ENCODE measurements at regions of chr5 and their contacts with region 1.

Region 1: GRCh38 chr5:113384782-113385285 is 50.0 kb downstream of the TSSK1B start:
- DNase-seq: no peak
- ATAC-seq: no peak
- H3K4me3 ChIP-seq: no peak overlapping the region
- H3K27ac ChIP-seq: no peak overlapping the region
- H3K4me1 ChIP-seq: no peaks in the 10 kb centered on the region
- H3K27me3 ChIP-seq: no peaks in the 10 kb centered on the region

Region 2: DNA sequence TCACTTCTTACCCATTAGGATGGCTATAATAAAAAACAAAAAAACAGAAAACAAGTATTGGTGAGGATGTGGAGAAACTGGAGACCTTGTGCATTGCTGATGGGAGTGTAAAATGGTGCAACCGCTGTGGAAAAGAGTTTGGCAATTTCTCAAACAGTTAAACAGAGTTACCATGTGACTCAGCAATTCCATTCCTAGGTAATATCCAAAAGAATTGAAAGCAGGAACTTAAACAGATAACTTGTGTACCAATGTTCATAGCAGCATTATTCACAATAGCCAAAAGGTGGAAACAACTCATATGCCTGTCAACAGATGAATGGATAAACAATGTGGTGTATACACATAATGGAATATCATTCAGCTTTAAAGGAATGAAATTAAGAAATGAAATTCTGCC is 379.4 kb before region 1 on chr5:
- intact Hi-C with region 1: no loop called
- DNase-seq: no peak
- ATAC-seq: no peak
- H3K4me3 ChIP-seq: no peak overlapping the region
- H3K27ac ChIP-seq: no peak overlapping the region
- H3K4me1 ChIP-seq: no peaks in the 10 kb centered on the region
- H3K27me3 ChIP-seq: no peaks in the 10 kb centered on the region

Region 3: DNA sequence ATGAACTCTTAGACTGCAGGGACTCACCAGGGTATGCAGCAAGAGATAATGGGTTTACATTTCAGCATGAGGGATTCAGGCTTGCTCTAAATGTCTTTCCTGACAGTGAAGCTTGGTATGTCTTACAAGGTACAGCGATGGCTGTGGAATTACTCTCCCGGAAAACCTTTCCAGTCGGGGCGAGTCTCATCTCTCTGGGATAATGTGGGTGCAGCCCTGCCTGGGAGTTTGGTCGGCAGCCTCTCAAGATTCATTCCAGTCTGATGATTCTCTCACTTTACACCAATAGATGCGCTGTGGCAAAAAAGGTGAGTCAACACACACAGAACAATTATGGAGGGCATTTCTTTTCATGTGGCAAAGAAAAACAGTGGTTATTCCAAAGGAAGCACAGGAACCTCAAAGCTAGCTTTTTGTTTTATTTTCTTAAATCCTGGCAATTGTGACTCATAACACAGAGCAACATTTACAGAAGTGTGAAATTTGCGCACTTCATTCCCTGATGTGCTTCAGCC is 217.9 kb before region 1 on chr5:
- intact Hi-C with region 1: no loop called
- DNase-seq: no peak
- ATAC-seq: no peak
- H3K4me3 ChIP-seq: no peak overlapping the region
- H3K27ac ChIP-seq: no peak overlapping the region
- H3K4me1 ChIP-seq: peaks cover 20% of the 10 kb centered on the region
- H3K27me3 ChIP-seq: no peaks in the 10 kb centered on the region

Region 4: GRCh38 chr5:113230711-113231652 is 153.9 kb before region 1 on chr5:
- intact Hi-C with region 1: no loop called
- DNase-seq: no peak
- ATAC-seq: no peak
- H3K4me3 ChIP-seq: no peak overlapping the region
- H3K27ac ChIP-seq: no peak overlapping the region
- H3K4me1 ChIP-seq: peaks cover 9% of the 10 kb centered on the region
- H3K27me3 ChIP-seq: no peaks in the 10 kb centered on the region

Region 5: DNA sequence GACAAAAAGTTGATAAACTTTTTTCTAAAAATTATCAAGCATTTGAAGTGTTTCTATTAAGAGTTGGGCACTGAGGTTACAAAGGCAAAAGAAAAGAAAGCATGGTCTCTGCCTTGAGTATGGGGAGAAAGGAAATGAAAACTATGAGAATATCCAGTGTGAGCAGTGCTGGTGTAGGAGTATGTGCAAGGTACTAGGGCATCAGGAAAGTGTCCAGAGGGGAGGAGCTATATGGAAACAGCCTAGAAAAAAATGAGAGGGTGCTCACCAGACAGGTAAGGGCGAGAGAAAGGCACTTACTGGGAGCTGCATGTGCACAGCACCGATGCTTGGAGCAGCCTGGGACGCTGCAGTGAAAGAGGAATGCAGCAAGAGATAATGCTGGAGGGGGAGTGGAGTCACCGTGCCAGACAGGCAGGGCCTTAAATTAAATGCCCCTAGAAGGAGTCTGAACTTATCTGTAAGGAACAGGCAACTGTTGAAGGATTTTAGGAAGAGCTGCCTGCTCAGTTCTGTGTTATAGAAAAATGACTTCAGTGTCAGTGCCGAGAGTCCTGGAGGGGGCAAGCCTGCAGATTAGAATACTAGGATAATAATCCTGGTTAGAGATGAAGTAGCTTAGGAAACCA is 89.4 kb after region 1 on chr5:
- intact Hi-C with region 1: loop called in 1 of 4 experiments (anchors 5 kb)
- DNase-seq: peak in 1 of 3 donors; percentile 31
- ATAC-seq: peak; percentile 34 to 40
- H3K4me3 ChIP-seq: no peak overlapping the region
- H3K27ac ChIP-seq: no peak overlapping the region
- H3K4me1 ChIP-seq: no peaks in the 10 kb centered on the region
- H3K27me3 ChIP-seq: no peaks in the 10 kb centered on the region

Measured in right cardiac atrium (tissue), 5 donors.